Right ventricle myocardium inferior (tissue), 1 donor: ENCODE measurements at regions of chr2 and their contacts with region 1.

Region 1: GRCh38 chr2:70948337-70949003 is 12.8 kb downstream of the ATP6V1B1 start:
- DNase-seq: peak; percentile 80
- ATAC-seq: peak; percentile 92

Region 2: DNA sequence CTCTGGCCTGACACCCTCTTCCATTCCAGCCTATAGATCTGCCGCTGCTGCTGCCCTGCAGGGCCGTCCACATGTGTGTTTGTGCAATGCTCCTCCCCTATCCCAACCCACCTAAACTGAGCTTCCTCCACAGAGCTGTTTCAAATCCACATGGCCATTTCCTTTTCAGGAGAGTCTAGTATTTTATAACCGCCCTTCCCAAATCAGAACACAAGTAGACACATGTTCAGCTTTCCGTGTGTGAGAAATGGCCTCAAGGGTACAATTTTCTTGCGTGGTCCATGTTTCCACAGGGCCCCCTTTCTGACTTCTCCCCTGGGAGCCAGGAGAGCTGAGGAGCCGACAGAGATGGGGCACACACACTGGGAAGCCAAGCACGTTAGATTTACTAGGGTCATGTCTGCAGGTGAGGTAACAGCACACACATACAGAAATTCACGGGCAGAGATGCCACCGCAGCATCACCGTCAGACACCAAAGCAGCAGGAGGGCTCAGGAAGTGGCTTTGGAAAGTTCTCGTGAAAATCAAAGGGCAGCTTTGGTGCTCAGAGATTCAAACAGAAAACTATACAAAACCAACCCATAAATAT is 292.0 kb before region 1 on chr2:
- intact Hi-C with region 1: loop called (anchors 10 kb)
- DNase-seq: no peak
- ATAC-seq: no peak

Region 3: DNA sequence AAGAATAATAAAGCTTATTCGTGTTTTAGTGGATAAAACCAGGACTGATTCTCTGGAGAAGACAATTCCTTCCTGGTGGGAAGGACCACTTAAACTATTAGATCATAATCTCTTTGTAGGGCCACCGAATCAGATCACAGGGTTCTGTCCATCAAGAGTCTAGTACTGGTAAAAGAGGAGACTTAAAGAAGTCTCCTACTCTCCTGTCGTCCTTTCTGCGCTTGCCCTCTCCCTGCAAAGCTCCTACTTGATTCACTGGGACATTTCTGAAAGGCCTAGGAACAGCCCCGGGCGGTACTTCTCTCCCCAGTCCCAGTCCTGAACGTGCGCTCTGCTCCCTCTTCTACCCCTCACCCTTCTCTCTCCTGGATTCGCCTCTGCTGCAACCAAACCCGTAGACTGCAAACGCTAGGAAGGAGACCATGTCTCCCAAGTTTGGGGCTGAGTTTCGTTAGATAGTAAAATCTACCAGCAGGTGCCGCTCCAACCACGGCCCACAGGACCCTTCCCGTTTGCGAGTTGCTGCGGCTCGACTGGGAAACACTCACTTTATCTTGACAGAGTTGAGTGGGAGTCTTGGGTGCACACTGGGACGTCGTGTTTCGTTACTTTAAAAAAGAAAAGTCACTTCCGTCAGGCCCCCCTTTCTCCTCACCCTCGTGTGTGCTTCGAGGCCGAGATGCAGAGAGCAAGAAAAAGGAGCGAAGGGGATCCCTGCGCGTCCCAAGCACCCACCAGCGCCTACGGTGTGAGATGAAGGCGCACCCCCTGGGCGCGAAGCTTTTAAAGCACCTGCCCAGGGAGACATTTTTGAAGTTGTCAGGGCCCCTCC is 158.9 kb before region 1 on chr2:
- intact Hi-C with region 1: loop called (anchors 5 kb)
- DNase-seq: peak; percentile 81
- ATAC-seq: peak; percentile 69

Region 4: DNA sequence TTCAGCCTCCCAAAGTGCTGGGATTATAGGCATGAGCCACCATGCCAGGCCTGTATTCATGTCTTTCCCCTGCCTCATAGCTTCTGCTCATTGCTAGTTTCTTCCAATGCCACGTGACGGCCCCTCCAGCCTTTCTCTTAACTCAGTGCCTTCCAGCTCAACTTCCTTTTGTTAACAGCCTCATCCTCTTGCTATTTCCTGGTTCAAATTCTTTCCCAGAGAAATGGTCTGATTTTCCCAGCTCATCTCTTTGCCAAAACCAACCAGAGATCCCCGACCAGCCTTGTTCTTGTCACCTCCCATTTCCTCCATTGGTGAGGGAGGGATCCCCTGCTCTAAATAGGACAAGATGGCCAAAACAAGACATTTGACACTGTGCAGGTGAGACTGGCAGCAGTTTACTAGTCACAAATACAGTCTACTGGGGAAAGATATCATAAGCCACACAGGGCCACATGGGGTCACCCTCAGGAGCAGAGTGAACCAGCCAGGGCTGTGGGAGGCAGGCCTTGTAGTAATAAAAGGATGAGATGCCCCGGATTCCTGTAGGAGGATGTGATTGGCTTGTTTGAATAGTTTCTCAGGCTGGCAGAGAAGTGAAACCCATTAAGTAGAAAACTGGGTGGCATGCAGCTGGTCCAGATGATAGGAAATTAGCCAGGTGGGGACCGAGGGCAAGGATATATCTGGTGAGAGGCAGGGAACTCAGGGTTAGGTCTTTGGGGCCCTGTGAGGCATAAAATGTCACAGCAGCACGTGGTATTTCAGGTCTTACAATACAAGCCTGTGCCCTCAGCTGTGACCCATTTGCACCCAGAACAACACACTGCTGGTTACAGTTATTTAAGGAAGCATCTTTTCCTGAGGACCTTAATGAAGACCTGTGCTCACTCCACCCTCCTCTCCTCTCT is 119.3 kb before region 1 on chr2:
- intact Hi-C with region 1: no loop called
- DNase-seq: no peak
- ATAC-seq: no peak

Region 5: DNA sequence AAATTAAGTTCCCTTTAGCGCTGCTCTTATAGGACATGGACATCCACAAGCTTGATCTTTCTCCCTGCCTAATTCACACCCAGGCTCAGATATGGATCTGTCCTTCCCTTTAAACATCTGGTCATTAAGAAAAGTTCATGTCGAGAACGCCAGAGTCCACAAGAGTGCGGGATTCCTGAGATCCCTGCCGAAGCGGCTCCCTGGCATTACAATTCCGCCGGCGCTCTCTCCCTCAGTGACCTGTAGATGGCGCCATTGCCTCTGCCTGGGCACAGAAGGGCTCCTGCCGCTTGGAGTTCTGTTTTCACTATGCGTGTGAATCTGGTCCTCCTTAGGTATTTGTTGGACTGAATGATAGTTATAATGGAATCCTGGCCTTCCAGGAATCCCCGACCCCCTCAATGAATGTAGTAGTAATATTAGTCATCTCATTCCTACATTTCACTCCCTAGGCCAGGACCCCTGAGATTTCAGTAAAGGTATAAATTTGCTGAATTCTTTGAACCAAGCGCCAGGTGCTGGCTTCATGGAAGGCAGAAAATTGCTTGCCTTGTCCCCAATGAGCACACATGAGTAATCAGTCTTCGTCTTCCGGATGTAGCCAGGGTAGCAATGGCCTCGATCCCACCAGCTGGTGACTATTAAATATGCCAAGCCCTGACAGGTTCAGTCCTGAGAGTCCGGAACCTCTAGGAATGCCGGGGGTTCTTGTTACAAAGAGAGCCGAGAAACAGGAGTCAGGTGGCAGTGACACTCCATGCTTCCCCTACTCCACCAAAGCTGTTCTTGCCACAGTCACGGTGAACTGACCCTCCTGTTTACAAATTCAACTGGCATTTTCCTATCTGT is 86.5 kb before region 1 on chr2:
- intact Hi-C with region 1: loop called (anchors 2 kb)
- DNase-seq: peak; percentile 85
- ATAC-seq: peak; percentile 80

Region 6: GRCh38 chr2:70871398-70872211 is 76.9 kb before region 1 on chr2:
- intact Hi-C with region 1: loop called (anchors 2 kb)
- DNase-seq: peak; percentile 91
- ATAC-seq: peak; percentile 94

Region 7: DNA sequence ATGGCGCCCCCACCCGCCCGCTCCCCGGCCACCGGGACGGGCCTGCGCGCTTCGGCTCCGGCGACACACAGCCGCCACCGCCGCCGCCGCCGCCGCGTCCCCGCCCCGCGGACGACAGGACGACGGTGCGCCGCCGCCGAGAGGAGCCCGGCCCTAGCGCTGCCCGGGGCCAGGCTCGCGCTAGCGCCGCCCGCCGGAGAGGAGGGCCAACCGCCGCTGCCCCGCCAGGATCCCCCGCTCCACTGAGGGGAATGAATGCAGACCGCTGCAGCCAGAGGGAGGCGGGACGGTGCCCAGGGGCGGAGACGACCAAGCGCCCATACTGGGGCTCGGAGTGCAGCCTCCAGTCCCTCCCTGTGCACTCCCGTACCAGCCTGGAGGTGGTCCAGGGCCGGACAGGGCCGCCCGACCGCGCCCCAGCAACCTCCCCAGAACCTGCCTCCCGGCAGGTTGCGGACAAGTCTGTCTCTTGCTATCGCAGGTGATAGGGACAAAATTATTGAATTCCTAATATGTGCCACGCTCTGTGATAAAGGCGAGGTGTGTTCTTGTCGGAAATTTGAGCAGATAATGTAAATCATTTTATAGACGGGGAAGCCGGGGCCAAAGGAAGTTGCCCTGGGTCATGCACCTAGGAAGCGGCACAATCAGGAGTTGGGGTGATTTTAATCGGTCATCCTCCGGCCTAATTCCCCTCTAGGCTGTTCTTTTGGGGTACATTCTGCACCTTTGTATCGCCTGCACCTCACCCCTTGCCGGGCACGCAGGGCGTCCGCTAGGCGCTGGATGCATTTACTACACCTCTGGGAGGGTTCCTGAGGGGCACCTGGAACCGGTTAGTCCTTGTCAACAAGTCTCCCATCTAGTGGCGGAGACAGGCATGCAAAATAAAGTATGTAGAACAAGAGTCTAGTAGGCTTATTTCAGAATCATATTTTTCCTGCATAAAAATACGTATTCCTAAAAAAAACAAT is 46.6 kb after region 1 on chr2 and contains the start of gene TEX261:
- intact Hi-C with region 1: no loop called
- DNase-seq: peak; percentile 95
- ATAC-seq: peak; percentile 99
- total RNA-seq, gene TEX261: 63.8 TPM